Activated B cell treated with CpG ODN at 0.5 μM for 24 hours (primary cell): ENCODE measurements at regions of chr1 and their contacts with region 1.

Region 1: DNA sequence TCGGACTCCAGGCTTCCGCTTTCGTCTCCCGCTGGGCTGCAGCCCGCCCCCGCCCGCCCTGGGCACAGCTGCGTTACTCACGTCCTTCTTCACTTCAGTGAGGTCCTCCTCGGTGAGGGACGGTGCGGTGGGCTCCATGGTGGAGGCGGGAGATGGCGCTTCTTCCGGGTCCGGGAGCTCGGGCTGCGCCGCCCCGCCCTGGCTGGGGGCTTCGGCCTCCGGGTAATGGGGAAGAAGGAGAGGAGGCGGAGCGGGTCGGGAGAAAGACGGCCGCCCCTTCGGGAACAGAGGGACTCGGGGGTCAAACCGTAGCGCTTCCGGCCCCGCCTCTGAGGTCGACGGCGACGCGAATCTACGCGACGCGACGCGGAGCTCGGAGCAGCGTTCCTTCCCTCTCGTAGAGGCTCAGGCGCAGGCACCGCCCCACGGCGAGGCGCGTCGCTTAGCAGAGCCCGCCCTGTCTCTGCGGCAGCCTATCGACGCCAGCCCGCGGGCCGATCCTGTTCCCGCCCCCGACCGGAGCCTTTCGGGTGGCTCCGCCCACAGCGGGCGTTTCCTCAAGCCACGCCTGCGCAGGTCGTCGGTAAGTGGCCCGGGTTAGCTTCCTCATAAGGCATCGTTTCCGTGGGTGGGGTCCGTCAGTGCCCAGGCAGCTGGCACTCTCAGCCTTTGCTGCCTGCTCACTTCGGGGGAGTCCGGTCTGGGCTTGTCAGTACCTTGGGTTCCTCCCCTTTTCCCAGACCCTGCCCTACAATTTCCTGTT is at the start of gene BCL10:
- DNase-seq: peak; percentile 98
- ATAC-seq: peak; percentile 94
- H3K4me3 Mint-ChIP-seq: peak within 1 kb of the TSS; percentile 91
- H3K27ac Mint-ChIP-seq: peak within 1 kb of the TSS; percentile 94
- H3K4me1 Mint-ChIP-seq: peaks cover 60% of the 10 kb centered on the region
- H3K27me3 Mint-ChIP-seq: no peaks in the 10 kb centered on the region
- CTCF ChIP-seq: no peak
- total RNA-seq, gene BCL10: 52.5 and 53.3 TPM in 2 replicates

Region 2: GRCh38 chr1:83998498-83999315 is 1277.7 kb before region 1 on chr1 and contains the start of gene TTLL7:
- CTCF ChIA-PET with region 1: no interaction called
- POLR2A ChIA-PET with region 1: no interaction called
- intact Hi-C with region 1: loop called (anchors 5 kb)
- DNase-seq: peak; percentile 65
- ATAC-seq: peak; percentile 86
- H3K4me3 Mint-ChIP-seq: peak within 1 kb of the TSS; percentile 82
- H3K27ac Mint-ChIP-seq: no peak within 1 kb of the TSS
- H3K4me1 Mint-ChIP-seq: peaks cover 13% of the 10 kb centered on the region
- H3K27me3 Mint-ChIP-seq: peaks cover 41% of the 10 kb centered on the region
- CTCF ChIP-seq: no peak
- total RNA-seq, gene TTLL7: 0.12 TPM in 1 of 2 replicates, not detected in the other

Region 3: DNA sequence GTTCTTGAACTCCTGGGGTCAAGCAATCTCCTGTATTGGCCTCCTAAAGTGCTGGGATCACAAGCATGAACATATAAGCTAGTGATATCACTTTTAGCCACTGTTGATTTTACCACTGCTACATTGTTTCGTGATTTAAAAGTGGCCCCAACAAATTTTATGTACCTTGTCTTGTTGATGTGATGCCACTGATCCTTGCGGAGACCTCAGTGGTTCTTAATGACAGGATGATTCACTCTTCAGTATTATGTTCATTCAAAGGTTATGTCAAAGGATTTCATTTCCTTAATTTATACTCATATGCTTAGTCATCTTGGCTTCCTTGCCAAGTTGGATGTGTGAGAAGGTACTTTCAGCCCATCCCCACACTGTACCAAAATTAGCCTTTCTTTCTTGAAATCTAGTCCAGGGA is 1120.2 kb before region 1 on chr1:
- CTCF ChIA-PET with region 1: no interaction called
- POLR2A ChIA-PET with region 1: no interaction called
- intact Hi-C with region 1: loop called (anchors 5 kb)
- DNase-seq: no peak
- ATAC-seq: peak; percentile 76
- H3K4me3 Mint-ChIP-seq: no peak overlapping the region
- H3K27ac Mint-ChIP-seq: peak overlapping the region; percentile 15
- H3K4me1 Mint-ChIP-seq: peaks cover 83% of the 10 kb centered on the region
- H3K27me3 Mint-ChIP-seq: no peaks in the 10 kb centered on the region
- CTCF ChIP-seq: no peak

Region 4: DNA sequence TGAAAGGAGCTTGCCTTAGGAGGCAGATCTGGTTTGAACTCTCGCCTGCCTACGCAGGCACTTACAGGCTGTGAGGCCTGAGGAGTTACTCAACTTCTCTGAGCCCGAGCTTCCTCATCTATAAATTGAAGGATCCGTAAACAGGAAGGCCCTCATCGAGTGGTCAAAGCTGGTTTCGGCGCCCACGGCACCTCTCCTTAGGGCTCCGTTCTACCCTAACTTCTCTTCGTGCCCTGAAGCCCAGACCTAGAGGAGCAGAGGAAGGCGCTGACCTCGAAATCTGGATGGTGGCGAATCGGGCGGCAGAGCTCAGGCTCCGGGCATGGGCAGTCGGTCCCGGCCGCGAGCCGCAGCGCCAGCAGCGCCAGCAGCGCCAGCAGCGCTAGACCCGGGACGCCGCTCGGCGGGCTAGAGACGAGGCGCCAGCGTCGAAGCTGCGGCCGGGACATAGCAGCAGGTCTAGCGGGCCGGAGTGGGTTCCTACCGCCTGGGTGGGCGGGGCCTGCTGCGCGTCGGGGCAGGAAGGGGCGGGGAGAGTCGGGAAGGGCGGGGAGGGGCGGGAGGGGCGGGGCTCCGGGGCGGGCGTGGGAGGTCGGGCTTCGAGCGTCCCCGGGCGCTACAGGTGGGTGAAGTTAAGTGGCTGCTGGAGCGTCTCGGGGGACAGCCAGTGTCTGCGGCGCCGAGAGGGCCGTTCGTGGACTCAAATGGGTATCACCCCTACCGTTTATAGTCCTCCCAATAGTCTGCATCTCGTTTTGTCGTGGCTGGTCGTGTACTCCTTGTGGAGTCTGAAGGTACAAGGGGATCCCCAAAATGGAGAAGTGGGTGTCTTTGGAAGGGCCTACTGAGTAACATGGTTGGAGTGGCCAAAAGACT is 702.2 kb before region 1 on chr1 and contains the start of gene CTBS:
- CTCF ChIA-PET with region 1: no interaction called
- POLR2A ChIA-PET with region 1: interaction called, 8 read pairs
- intact Hi-C with region 1: loop called (anchors 5 kb)
- DNase-seq: peak; percentile 81
- ATAC-seq: peak; percentile 91
- H3K4me3 Mint-ChIP-seq: peak within 1 kb of the TSS; percentile 96
- H3K27ac Mint-ChIP-seq: peak within 1 kb of the TSS; percentile 99
- H3K4me1 Mint-ChIP-seq: peaks cover 40% of the 10 kb centered on the region
- H3K27me3 Mint-ChIP-seq: no peaks in the 10 kb centered on the region
- CTCF ChIP-seq: no peak
- total RNA-seq, gene CTBS: 11.8 and 13.2 TPM in 2 replicates

Region 5: DNA sequence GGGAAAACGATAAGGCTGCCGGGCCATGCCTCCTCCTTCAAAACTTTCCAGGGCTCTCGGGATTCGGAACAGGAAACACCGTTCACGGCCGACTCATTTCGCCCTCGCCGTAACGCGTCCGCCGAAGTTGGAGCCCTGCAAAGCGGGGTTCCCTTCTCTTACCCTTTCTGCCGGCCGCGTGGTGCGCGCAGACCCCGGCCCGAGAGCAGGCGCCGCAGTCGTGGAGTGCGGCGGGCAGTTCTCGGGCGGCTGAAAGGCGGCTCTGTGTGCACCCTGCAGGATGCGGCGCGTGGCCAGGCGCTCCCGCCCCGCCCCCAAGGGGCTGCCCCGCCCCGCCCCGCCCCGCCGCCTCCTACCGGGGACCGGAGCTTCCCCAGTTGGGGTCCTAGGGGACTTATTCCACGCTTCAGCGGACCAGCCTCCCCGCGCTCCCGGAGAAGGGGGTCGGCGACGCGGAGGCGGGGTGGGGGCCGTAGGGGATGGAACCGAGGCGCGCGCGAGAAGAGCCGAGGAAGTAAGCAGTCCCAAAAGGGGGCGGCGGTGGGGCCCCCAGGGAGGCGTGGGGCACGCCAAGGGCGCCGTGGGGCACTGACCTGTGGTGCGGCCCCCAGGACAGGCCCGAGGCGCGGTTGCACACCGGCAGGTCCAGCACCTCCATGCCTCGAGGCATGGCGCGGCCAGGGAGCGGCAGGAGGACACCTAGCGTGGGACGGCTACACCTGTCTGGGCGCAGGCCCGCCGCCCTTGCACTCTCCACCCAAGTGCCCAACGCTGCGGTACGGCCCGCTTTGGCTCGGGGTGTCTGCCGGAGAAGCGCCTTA is 279.3 kb before region 1 on chr1 and contains the start of gene MCOLN2:
- CTCF ChIA-PET with region 1: no interaction called
- POLR2A ChIA-PET with region 1: interaction called, 23 read pairs
- intact Hi-C with region 1: loop called (anchors 1 kb)
- DNase-seq: peak; percentile 60
- ATAC-seq: peak; percentile 67
- H3K4me3 Mint-ChIP-seq: peak within 1 kb of the TSS; percentile 85
- H3K27ac Mint-ChIP-seq: peak within 1 kb of the TSS; percentile 87
- H3K4me1 Mint-ChIP-seq: peaks cover 63% of the 10 kb centered on the region
- H3K27me3 Mint-ChIP-seq: peaks cover 2% of the 10 kb centered on the region
- CTCF ChIP-seq: no peak
- total RNA-seq, gene MCOLN2: 60.1 and 80.2 TPM in 2 replicates

Region 6: GRCh38 chr1:85166351-85166750 is 110.0 kb before region 1 on chr1:
- CTCF ChIA-PET with region 1: no interaction called
- POLR2A ChIA-PET with region 1: no interaction called
- intact Hi-C with region 1: no loop called
- DNase-seq: no peak
- ATAC-seq: no peak
- H3K4me3 Mint-ChIP-seq: no peak overlapping the region
- H3K27ac Mint-ChIP-seq: no peak overlapping the region
- H3K4me1 Mint-ChIP-seq: no peaks in the 10 kb centered on the region
- H3K27me3 Mint-ChIP-seq: peaks cover 5% of the 10 kb centered on the region
- CTCF ChIP-seq: no peak

Region 7: DNA sequence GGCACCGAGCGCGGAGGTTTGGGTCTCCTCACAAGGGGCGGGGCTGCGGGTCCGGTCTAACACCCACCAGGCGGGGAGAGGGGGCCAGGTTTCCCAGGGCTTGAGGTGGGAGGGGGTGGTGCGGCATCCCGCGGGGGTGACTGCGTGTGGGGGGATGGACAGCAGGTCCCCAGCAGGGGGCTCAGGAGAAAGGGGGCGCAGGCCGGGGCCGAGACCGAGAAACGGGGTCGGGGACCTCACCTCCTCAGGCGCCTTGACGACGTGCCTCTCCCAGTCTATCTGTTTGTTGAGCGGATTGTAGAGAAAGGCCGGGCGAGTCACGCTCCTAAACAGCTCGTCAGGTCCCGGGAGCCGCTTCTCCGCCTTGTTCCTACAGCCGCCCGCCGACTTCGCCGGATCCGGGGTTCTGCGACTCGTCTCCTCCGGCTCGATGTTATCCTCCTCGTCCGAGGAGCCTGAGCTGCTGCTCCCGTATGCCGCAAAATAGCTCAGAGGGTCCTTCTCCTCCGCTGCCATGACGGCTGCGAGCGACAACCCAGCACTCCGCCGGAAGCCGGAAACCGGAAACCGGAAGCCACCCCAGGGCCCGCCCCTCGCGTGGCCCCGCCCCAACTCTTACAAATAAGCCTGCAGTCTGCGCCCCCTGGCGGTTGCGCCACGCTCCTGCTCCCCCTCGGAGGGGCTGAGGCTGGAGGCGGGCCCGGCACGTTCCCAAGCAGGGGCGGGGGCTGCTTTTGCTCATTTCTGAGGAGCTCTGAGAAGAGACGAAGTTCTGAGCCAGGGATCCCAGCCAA is 17.1 kb before region 1 on chr1 and contains the start of gene C1orf52:
- CTCF ChIA-PET with region 1: interaction called, 48 read pairs
- POLR2A ChIA-PET with region 1: interaction called, 115 read pairs
- intact Hi-C with region 1: loop called (anchors 1 kb)
- DNase-seq: peak; percentile 99
- ATAC-seq: peak; percentile 96
- H3K4me3 Mint-ChIP-seq: peak within 1 kb of the TSS; percentile 98
- H3K27ac Mint-ChIP-seq: peak within 1 kb of the TSS; percentile 92
- H3K4me1 Mint-ChIP-seq: peaks cover 37% of the 10 kb centered on the region
- H3K27me3 Mint-ChIP-seq: no peaks in the 10 kb centered on the region
- CTCF ChIP-seq: peak; percentile 88
- total RNA-seq, gene C1orf52: 31.4 and 32.0 TPM in 2 replicates

Region 8: DNA sequence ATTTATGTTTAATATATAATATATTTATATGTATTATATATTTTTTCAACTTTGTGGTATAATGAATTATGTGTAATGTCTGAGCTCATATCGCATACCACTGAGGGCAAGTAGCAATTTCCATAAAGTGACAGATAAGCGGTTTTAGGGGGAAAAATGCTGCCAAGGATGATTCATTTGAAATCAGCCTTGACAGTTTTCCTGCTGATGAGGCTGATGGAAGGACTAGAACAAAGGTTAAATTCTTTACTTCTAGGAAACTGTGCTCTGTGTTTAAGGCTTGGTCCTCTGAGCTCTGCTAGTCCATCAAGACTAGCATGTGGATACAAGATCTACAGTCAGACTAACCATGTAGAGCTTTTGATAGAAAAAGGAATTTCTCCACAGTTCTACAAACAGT is 207.9 kb after region 1 on chr1:
- CTCF ChIA-PET with region 1: no interaction called
- POLR2A ChIA-PET with region 1: no interaction called
- intact Hi-C with region 1: no loop called
- DNase-seq: no peak
- ATAC-seq: no peak
- H3K4me3 Mint-ChIP-seq: no peak overlapping the region
- H3K27ac Mint-ChIP-seq: no peak overlapping the region
- H3K4me1 Mint-ChIP-seq: no peaks in the 10 kb centered on the region
- H3K27me3 Mint-ChIP-seq: peaks cover 7% of the 10 kb centered on the region
- CTCF ChIP-seq: no peak

Region 9: DNA sequence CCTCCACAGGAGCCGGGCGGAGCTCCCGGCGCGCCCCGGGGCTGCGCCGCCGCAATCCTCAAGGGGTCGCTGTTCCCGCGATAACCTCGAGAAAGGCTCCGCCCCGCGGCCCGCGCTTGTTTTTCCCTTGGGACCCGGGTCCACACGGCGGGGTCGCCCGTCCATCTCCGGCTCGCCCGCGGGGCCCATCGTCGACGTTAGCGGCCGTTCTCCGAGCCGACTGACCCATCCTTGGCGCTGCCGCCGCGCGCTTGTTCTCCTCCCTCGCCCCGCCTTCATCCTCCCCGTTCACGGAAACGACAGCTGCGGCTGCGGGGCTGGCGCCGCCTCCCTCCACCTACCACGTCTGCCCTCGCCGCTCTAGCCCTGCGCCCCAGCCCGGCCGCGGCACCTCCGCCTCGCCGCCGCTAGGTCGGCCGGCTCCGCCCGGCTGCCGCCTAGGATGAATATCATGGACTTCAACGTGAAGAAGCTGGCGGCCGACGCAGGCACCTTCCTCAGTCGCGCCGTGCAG is 1428.1 kb after region 1 on chr1 and contains the start of gene SH3GLB1:
- CTCF ChIA-PET with region 1: no interaction called
- POLR2A ChIA-PET with region 1: interaction called, 17 read pairs
- intact Hi-C with region 1: loop called (anchors 5 kb)
- DNase-seq: peak; percentile 92
- ATAC-seq: peak; percentile 87
- H3K4me3 Mint-ChIP-seq: peak within 1 kb of the TSS; percentile 99
- H3K27ac Mint-ChIP-seq: peak within 1 kb of the TSS; percentile 99
- H3K4me1 Mint-ChIP-seq: peaks cover 46% of the 10 kb centered on the region
- H3K27me3 Mint-ChIP-seq: no peaks in the 10 kb centered on the region
- CTCF ChIP-seq: peak; percentile 26
- total RNA-seq, gene SH3GLB1: 63.8 and 63.9 TPM in 2 replicates